ENCODE measurements at regions of chr2 and their contacts with region 1.

Region 1: DNA sequence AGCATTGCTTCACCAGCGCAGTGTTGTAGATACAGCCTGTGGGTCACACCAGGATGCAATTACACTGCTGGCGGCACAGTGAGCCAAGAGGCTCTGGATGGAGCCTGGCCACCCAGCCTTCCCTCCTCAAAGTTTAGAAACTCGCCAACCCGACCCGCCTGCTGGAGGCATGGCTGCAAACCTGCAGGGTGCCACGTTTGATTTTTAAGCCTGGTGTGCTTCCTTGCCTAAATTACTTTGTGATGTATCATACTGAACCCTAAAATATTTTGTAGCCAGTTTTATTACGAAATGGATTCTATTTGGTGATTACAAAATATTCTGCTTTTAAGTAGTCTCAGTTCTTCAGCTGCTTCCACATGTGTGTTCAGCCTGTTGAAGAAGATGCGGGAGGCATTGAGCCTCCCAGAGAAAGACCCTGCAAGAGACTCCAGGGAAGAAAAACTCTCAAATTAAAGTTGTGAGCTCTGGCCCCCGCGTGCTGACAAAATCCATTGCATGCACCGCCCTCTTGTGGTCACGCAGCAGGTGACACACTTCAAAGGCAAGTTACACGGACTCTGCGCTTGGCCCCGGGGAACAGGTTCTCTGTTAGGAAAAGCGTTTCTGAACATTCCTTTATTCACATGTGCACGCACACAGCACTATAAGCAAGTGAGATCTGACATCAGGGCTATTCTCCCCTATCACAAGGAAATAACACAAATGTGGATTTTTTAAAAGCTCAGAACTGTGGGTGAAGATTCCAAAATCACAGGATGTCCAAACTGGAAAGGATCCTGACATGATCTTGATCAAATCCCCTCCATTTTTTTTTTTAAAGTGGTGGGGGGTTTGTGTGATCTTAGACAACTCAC is 63.0 kb upstream of the TWIST2 start:
- DNase-seq: peak; percentile 39 to 96 (median 76)

Region 2: DNA sequence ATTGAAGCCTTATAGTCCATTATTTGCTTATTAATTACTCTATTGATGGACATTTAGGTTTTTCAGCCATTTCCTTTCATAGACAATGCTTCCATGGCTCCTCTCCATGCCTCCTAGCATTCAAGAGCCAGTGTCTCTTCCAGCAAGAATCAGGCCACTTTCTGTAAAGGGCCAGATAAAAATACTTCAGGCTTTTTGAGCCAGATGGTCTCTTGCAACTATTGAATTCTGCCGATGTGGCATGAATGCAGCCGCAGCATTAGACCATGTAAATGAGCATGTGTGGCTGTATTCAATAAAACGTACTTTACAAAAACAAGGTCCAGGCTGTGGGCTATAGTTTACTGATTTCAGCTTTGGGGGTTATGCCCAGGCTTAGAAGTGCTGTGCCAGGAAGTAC is 426.1 kb before region 1 on chr2:
- intact Hi-C with region 1: loop called (anchors 5 kb)
- DNase-seq: peak in 2 of 10 donors; percentile 39 to 68

Region 3: DNA sequence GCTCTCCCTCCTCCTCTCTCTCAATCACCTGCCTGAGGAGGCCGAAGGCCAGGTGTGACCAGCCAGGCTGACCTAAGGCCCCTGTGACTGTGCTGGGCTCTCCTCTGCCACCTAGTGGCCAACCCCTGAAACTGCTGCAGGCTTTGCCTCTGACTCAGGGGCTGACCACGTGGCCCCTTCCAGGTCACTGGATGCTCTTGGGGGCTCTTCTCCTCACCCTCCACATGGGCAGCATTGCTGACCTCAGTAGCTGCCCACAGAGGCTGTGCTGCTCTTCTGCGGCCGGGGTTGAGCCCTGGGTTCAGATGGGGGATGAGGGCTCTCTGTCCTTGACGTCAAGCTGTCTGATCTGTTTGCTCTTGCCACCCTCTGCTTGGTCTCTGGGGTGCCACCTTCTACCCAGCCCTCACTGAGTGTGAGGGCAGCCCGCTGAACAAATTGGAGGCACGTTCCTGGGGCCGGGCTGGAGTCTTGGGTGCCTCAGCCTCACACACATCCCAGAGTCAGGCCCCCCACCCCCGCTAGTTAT is 185.7 kb after region 1 on chr2:
- intact Hi-C with region 1: loop called (anchors 5 kb)
- DNase-seq: peak in 7 of 10 donors; percentile 36 to 92 (median 61)

Region 4: DNA sequence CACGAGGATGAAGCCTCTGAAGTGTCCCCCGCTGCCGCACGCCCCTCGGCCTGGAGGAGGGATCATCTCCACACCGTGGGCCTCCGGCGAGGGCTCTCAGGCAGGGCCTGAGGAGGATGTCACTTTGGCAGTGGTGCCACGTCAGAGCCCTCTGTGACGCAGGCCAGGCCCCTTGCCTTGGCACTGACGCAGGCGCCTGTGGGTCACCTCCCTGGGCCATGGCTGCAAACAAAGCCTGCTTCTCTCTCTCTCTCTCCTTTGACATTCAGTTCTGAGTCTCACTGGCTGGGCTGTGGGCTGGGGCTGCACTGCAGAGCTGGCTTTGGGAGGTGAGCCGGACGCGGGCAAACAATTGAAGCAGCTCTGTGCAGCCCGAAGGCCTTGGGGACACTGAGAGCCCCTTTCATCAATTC is 336.7 kb after region 1 on chr2:
- intact Hi-C with region 1: no loop called
- DNase-seq: peak in 9 of 10 donors; percentile 64 to 94 (median 76)